ENCODE measurements at regions of chr11 and their contacts with region 1.

Region 1: DNA sequence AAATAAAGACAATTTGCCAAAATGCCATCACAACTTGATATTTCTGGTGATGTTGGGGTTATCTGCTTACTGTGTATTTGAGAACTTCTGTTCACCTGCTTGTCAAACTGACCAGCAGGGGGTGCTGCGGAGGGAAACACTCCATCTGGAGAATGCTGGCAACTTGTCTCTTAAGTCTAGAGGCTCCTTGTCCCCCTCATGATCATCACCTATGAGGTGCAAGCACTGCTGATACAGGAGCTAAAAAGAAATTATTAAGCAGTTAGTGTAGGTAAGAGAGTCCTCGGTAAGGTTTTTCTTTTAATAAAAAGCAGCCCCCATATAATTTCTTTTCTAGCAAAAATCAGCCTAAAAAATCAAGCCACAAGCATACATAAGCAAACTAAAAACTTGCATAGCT is 32.7 kb upstream of the GLYATL1B start:
- DNase-seq: peak; percentile 77
- ATAC-seq: no peak
- H3K4me3 ChIP-seq: no peak overlapping the region
- H3K4me3 Mint-ChIP-seq: peak overlapping the region; percentile 36
- H3K27ac ChIP-seq: no peak overlapping the region
- H3K27ac Mint-ChIP-seq: no peak overlapping the region
- H3K4me1 ChIP-seq: peaks cover 58 to 66% of the 10 kb centered on the region in 2 donors
- H3K4me1 Mint-ChIP-seq: peaks cover 68% of the 10 kb centered on the region
- H3K27me3 ChIP-seq: no peaks in the 10 kb centered on the region
- H3K27me3 Mint-ChIP-seq: no peaks in the 10 kb centered on the region
- CTCF ChIP-seq: peak; percentile 73

Region 2: DNA sequence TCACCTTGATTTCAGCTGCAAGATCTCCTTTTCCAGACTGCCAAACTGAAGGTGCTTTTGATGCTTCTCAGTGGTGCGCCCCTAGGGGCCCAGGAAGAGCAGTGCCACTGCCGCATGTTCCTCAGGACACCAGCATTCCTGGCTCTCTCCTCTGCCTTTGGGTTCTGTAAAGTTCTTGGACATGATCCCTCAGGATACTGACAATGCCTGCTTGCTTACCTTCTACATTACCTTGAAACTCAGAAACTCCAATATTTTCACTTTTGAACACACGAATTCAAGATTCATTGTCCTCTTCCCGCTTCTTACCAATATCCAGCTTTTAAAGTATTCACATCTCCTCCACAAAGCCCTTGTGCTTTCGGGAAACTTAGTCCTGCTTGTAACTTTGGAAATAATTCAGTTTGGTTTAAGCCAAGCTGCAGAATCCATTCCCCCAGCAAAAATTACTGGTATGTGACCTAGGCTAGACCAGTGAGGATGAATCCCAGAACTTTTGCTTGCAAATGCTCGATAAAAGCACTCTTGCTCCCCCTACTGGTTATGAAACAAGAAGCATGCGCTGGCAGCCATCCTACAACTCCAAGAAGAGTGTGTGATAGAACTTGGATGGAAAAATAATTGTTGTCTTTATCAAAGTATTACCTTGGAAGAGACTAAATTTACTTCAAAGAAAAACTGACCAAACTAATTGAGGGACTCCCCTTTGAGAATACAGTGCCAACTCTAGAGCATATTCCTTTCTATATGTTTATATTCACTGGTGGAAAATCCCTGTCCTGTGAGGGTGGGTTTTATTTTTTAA is 529.0 kb before region 1 on chr11:
- CTCF ChIA-PET with region 1: no interaction called
- POLR2A ChIA-PET with region 1: no interaction called
- intact Hi-C with region 1: loop called (anchors 5 kb)
- DNase-seq: peak; percentile 79
- ATAC-seq: peak; percentile 31
- H3K4me3 ChIP-seq: peak overlapping the region; percentile 22 to 70 (median 45)
- H3K4me3 Mint-ChIP-seq: peak overlapping the region; percentile 84
- H3K27ac ChIP-seq: peak overlapping the region; percentile 81 to 99
- H3K27ac Mint-ChIP-seq: peak overlapping the region; percentile 93
- H3K4me1 ChIP-seq: peaks cover 28 to 32% of the 10 kb centered on the region in 2 donors
- H3K4me1 Mint-ChIP-seq: peaks cover 29% of the 10 kb centered on the region
- H3K27me3 ChIP-seq: no peaks in the 10 kb centered on the region
- H3K27me3 Mint-ChIP-seq: no peaks in the 10 kb centered on the region
- CTCF ChIP-seq: peak; percentile 86

Region 3: GRCh38 chr11:58675334-58676155 is 377.8 kb before region 1 on chr11:
- CTCF ChIA-PET with region 1: interaction called, 13 read pairs
- POLR2A ChIA-PET with region 1: no interaction called
- intact Hi-C with region 1: no loop called
- DNase-seq: peak; percentile 74
- ATAC-seq: peak; percentile 73
- H3K4me3 ChIP-seq: no peak overlapping the region
- H3K4me3 Mint-ChIP-seq: no peak overlapping the region
- H3K27ac ChIP-seq: no peak overlapping the region
- H3K27ac Mint-ChIP-seq: no peak overlapping the region
- H3K4me1 ChIP-seq: no peaks in the 10 kb centered on the region
- H3K4me1 Mint-ChIP-seq: no peaks in the 10 kb centered on the region
- H3K27me3 ChIP-seq: peaks cover 0 to 16% (median 4%) of the 10 kb centered on the region in 4 experiments
- H3K27me3 Mint-ChIP-seq: peaks cover 12% of the 10 kb centered on the region
- CTCF ChIP-seq: peak; percentile 96

Region 4: DNA sequence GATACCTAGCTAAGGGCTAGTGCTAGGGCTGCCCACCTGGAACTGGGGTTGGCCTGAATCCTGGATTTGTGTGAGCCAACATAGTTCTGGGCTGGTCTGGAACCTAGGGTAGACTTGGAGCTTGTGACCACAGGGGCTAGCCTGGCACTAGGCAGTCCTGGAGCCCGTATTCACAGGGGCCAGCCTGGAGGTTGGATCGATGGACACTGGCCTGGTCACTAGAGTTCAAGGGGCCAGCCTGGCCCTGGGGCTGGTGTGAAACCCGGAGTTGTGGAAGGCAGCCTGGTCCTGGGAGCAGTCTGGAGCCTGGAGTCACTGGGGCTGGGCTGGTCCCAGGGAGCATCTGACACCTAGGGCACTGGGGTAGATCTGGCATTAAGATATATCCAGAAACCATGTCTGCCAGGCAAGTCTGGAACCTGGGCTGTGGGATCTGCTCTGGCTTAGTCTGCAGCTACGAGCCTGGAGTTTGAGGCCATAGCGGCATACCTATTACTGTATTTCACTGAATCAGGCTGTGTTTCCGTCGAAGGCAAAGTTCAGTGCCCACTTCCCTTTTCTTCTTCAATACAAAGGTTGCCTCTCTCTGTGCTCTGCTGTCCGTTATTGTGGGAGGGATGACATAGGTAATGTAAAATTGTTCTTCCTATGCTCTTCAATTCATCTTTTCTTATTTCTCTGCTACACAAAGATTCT is 23.6 kb after region 1 on chr11:
- CTCF ChIA-PET with region 1: interaction called, 21 read pairs
- POLR2A ChIA-PET with region 1: interaction called, 8 read pairs
- intact Hi-C with region 1: loop called (anchors 1 kb)
- DNase-seq: peak; percentile 76
- ATAC-seq: peak; percentile 86
- H3K4me3 ChIP-seq: peak overlapping the region in 1 of 5 experiments; percentile 15
- H3K4me3 Mint-ChIP-seq: peak overlapping the region; percentile 60
- H3K27ac ChIP-seq: peak overlapping the region; percentile 70 to 80
- H3K27ac Mint-ChIP-seq: peak overlapping the region; percentile 79
- H3K4me1 ChIP-seq: peaks cover 54 to 58% of the 10 kb centered on the region in 2 donors
- H3K4me1 Mint-ChIP-seq: peaks cover 55% of the 10 kb centered on the region
- H3K27me3 ChIP-seq: no peaks in the 10 kb centered on the region
- H3K27me3 Mint-ChIP-seq: no peaks in the 10 kb centered on the region
- CTCF ChIP-seq: no peak

Region 5: DNA sequence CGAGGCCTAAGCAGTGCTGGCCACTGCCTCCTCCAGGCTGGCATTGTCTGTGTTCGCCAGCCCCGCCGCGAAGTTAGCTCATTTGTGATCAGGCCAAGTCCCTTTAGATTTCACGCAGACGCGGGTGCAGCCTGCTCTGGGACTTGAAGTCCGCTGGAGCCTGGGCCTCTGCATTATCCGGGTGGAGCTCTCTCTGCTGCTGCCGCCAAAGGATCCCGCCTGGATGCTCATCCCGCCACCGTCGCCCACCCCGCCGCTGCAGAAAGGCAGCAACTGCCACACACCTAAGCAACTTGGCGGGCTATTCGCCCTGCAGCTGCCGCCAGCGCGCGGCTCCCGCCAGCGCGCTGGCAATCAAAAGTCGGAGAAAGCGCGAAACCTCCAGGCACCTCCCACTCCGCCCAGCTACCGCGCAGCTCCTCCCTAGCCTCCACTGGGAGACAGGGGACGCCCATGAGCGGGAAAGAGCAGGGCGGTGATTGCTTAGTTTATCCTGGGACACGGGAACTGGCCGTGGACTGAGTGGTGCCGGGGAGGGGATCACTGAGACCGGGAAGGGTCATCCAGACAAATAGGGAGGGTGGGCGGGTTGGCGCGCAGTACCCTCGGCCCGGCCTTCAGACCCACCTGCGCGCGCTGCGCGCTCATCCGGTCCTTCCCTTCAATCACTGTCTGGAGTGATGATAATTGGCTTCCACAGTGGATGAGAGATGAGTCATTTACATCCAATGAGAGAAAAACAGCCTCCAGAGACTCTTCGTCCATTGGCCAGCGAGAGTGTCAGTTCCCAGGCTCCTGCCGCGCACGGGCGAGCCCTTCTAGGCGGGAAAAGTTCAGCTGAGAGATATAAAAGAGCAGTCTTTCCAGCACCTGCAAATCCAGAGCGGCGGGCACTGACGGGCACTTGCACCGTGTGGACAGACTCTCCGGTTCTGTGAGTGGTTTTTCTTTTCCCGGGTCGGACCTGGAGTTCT is 53.3 kb after region 1 on chr11 and contains the start of gene FAM111B:
- CTCF ChIA-PET with region 1: interaction called, 45 read pairs
- POLR2A ChIA-PET with region 1: interaction called, 13 read pairs
- intact Hi-C with region 1: loop called (anchors 1 kb)
- DNase-seq: peak; percentile 73
- ATAC-seq: peak; percentile 48
- H3K4me3 ChIP-seq: peak within 1 kb of the TSS; percentile 47 to 79 (median 61)
- H3K4me3 Mint-ChIP-seq: peak within 1 kb of the TSS; percentile 94
- H3K27ac ChIP-seq: peak within 1 kb of the TSS; percentile 25 to 59
- H3K27ac Mint-ChIP-seq: peak within 1 kb of the TSS; percentile 93
- H3K4me1 ChIP-seq: peaks cover 64 to 72% of the 10 kb centered on the region in 2 donors
- H3K4me1 Mint-ChIP-seq: peaks cover 83% of the 10 kb centered on the region
- H3K27me3 ChIP-seq: no peaks in the 10 kb centered on the region
- H3K27me3 Mint-ChIP-seq: no peaks in the 10 kb centered on the region
- CTCF ChIP-seq: no peak
- total RNA-seq, gene FAM111B: 148 and 155 TPM in 2 replicates

Region 6: DNA sequence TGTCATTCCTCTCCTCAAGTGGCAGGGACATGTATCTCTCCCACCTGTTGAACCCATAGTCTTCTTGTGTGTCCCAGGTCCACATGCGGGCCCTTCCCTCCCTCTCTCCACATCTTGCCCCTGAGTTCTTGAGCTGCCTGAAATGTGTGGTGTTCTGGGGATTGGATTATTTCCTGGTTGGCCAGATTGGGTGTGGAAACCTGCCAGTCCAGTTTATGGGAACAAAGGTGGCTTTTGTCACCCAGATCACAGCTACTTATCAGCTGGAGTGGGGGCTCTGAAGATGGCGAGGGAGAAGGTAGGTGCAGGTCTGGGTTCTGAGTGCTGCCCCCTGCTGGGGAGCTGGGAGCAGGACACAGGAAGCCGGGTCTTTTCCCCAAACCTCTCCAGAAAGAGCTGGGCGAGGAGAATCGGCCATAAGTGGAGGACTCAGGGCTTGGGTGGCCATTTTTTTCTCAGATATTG is 132.8 kb after region 1 on chr11:
- CTCF ChIA-PET with region 1: no interaction called
- POLR2A ChIA-PET with region 1: no interaction called
- intact Hi-C with region 1: no loop called
- DNase-seq: peak; percentile 68
- ATAC-seq: peak; percentile 59
- H3K4me3 ChIP-seq: no peak overlapping the region
- H3K4me3 Mint-ChIP-seq: no peak overlapping the region
- H3K27ac ChIP-seq: no peak overlapping the region
- H3K27ac Mint-ChIP-seq: no peak overlapping the region
- H3K4me1 ChIP-seq: peaks cover 0 to 2% of the 10 kb centered on the region in 2 donors
- H3K4me1 Mint-ChIP-seq: peaks cover 20% of the 10 kb centered on the region
- H3K27me3 ChIP-seq: no peaks in the 10 kb centered on the region
- H3K27me3 Mint-ChIP-seq: no peaks in the 10 kb centered on the region
- CTCF ChIP-seq: peak; percentile 69

Region 7: GRCh38 chr11:59207988-59208451 is 154.6 kb after region 1 on chr11:
- CTCF ChIA-PET with region 1: no interaction called
- POLR2A ChIA-PET with region 1: no interaction called
- intact Hi-C with region 1: loop called (anchors 2 kb)
- DNase-seq: peak; percentile 84
- ATAC-seq: peak; percentile 68
- H3K4me3 ChIP-seq: peak overlapping the region; percentile 49 to 91 (median 73)
- H3K4me3 Mint-ChIP-seq: peak overlapping the region; percentile 95
- H3K27ac ChIP-seq: peak overlapping the region; percentile 64 to 89
- H3K27ac Mint-ChIP-seq: peak overlapping the region; percentile 95
- H3K4me1 ChIP-seq: peaks cover 61 to 68% of the 10 kb centered on the region in 2 donors
- H3K4me1 Mint-ChIP-seq: peaks cover 93% of the 10 kb centered on the region
- H3K27me3 ChIP-seq: no peaks in the 10 kb centered on the region
- H3K27me3 Mint-ChIP-seq: no peaks in the 10 kb centered on the region
- CTCF ChIP-seq: peak; percentile 82

Region 8: GRCh38 chr11:60672255-60672654 is 1618.9 kb after region 1 on chr11:
- CTCF ChIA-PET with region 1: no interaction called
- POLR2A ChIA-PET with region 1: no interaction called
- intact Hi-C with region 1: no loop called
- DNase-seq: no peak
- ATAC-seq: no peak
- H3K4me3 ChIP-seq: no peak overlapping the region
- H3K4me3 Mint-ChIP-seq: no peak overlapping the region
- H3K27ac ChIP-seq: no peak overlapping the region
- H3K27ac Mint-ChIP-seq: no peak overlapping the region
- H3K4me1 ChIP-seq: no peaks in the 10 kb centered on the region
- H3K4me1 Mint-ChIP-seq: no peaks in the 10 kb centered on the region
- H3K27me3 ChIP-seq: peaks cover 0 to 9% (median 7%) of the 10 kb centered on the region in 4 experiments
- H3K27me3 Mint-ChIP-seq: peaks cover 25% of the 10 kb centered on the region
- CTCF ChIP-seq: no peak